Naive thymus-derived CD4-positive, alpha-beta T cell (primary cell): ENCODE measurements at regions of chr15 and their contacts with region 1.

Region 1: DNA sequence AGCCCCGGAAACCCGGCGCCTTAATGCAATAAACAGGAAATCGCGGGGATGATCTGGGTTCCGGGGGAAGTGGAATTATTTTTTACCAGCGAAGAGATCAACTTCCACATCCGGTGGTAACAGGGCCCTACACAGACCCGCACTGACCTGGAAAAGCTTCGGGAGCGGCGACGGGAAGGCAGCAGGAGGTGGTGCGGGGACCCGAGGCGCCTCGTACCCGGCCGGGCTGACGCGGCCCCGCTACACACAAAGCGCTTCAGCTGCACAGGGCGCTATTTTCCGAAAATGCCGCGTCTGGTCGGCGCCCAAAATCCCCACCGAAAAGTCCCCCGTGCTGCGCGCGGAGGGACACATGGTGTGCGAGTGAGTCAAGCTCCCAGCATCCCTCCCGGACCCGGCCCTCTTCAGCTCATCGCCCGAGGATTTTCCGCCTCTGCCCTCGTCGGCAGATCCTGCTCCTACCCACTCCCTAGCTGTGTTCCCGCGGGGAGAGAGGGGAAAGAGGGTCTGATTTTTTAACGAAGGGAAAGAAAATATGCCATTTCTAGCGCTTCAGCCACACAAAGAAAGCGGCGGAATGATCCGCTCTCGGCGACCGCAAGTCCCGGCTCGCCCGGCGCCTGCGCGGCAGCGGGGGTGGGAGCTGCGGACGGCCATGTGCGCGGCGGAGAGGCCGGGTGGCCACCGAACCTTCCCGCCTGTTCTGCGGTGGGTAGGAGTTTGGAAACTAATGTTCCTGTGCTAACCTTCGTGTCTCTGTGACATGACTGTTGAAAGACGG is at the start of gene GABPB1:
- DNase-seq: peak; percentile 85 to 93 (median 91)
- ATAC-seq: peak; percentile 69
- H3K4me3 ChIP-seq: peak within 1 kb of the TSS; percentile 83
- H3K4me3 Mint-ChIP-seq: peak within 1 kb of the TSS; percentile 83 to 99 (median 98)
- H3K27ac ChIP-seq: peak within 1 kb of the TSS; percentile 97
- H3K27ac Mint-ChIP-seq: peak within 1 kb of the TSS; percentile 98 to 100 (median 99)
- H3K4me1 ChIP-seq: peaks cover 38 to 47% of the 10 kb centered on the region in 2 donors
- H3K4me1 Mint-ChIP-seq: peaks cover 38 to 71% (median 55%) of the 10 kb centered on the region in 7 donors
- H3K27me3 ChIP-seq: no peaks in the 10 kb centered on the region
- H3K27me3 Mint-ChIP-seq: peaks cover 0 to 12% (median 0%) of the 10 kb centered on the region in 5 donors
- total RNA-seq, gene GABPB1: 14.7 to 42.7 (median 16.8) TPM

Region 2: DNA sequence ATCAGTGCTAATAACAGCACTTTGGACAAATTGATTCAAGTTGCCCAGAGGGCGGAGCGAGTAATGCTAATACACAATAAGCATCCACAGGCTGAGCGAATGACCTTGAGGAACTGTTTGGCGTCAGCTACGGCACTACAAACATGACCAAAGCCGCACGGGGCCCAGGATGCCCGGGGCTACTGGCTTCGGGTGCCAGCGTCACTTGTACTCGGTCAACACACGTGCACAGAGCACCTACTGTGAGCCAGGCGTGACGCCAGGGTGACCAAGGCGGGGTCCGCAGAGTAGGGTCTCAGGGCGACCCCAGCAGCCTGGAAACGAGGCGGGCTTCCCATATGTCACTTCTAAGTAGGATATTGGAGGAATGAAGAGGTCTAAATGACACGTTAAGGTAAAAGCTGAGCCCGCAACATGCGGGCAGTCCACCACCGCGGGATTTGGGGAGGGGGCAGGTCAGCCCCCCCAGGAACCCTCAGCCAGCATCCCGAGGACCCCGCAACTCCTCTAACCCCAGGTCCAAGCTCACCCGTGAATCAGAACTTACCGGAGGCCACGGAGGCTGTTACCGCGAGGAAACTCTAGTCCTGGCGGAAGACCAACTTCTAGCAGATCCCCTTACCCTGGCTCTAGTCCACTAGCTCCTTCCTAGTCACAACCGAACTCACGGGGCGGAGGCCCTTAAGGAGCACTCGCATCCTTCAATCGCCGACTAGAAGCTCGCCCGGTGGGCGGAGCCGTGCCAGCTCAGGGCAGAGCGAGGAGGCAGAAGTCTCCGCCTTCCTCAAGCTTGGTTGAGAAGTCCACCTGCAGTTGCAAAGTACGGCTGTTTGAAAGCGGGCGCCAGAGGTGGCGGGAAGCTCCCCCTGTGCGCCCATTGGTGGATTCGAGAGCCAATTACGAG is 1544.4 kb before region 1 on chr15 and contains the start of gene CEP152:
- CTCF ChIA-PET with region 1: no interaction called
- POLR2A ChIA-PET with region 1: interaction called, 9 read pairs
- intact Hi-C with region 1: loop called (anchors 1 to 2 kb)
- DNase-seq: peak; percentile 91 to 99 (median 98)
- ATAC-seq: peak; percentile 98
- H3K4me3 ChIP-seq: peak within 1 kb of the TSS; percentile 78
- H3K4me3 Mint-ChIP-seq: peak within 1 kb of the TSS; percentile 82 to 96 (median 89)
- H3K27ac ChIP-seq: peak within 1 kb of the TSS; percentile 76
- H3K27ac Mint-ChIP-seq: peak within 1 kb of the TSS; percentile 14 to 96 (median 87)
- H3K4me1 ChIP-seq: peaks cover 9 to 13% of the 10 kb centered on the region in 2 donors
- H3K4me1 Mint-ChIP-seq: peaks cover 12 to 38% (median 33%) of the 10 kb centered on the region in 7 donors
- H3K27me3 ChIP-seq: no peaks in the 10 kb centered on the region
- H3K27me3 Mint-ChIP-seq: peaks cover 0 to 24% (median 0%) of the 10 kb centered on the region in 5 donors
- total RNA-seq, gene CEP152: 6.2 to 26.3 (median 17.0) TPM

Region 3: DNA sequence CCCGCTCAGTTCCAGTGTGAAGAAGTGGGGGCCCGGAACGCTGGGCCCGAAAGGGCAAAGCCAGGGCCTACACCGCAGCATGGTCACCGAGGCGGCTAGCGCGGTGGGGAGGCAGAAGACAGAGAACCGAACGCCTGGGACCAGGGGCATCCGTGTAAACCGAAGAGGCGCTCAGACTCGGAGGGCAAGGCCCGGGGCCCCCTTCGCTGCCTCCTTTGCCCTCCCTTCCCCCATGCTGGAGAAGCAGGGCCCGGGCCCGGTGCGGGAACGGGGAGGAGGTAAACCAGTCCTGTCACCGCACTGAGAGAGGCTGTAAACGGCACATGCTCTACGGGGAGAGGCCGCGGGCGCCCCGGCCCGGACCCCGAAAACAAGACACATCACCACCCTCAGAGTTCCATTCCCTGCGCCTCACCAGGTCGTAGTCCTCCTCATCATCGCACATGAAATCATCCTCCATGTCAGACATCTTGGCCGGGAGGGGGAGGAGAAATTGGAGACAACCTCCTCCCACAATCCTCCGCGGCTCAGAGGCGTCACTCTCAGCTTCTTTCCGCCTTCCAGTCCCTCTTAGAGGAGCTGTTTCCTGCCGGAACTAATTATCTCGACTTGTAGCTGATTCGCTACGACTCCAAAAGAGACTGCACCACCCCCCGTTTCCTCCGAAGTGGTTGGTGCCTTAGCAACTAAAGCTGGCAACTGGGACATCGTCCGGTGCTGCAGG is 1199.8 kb before region 1 on chr15 and contains the start of gene COPS2:
- CTCF ChIA-PET with region 1: no interaction called
- POLR2A ChIA-PET with region 1: interaction called, 11 read pairs
- intact Hi-C with region 1: loop called (anchors 1 to 5 kb)
- DNase-seq: peak; percentile 69 to 96 (median 94)
- ATAC-seq: peak; percentile 99
- H3K4me3 ChIP-seq: peak within 1 kb of the TSS; percentile 88
- H3K4me3 Mint-ChIP-seq: peak within 1 kb of the TSS; percentile 95 to 100 (median 98)
- H3K27ac ChIP-seq: peak within 1 kb of the TSS; percentile 93
- H3K27ac Mint-ChIP-seq: peak within 1 kb of the TSS; percentile 93 to 100 (median 97)
- H3K4me1 ChIP-seq: peaks cover 9 to 25% of the 10 kb centered on the region in 2 donors
- H3K4me1 Mint-ChIP-seq: peaks cover 40 to 72% (median 59%) of the 10 kb centered on the region in 7 donors
- H3K27me3 ChIP-seq: no peaks in the 10 kb centered on the region
- H3K27me3 Mint-ChIP-seq: no peaks in the 10 kb centered on the region
- total RNA-seq, gene COPS2: 51.0 to 91.5 (median 63.6) TPM

Region 4: GRCh38 chr15:50182219-50183013 is 172.6 kb before region 1 on chr15:
- CTCF ChIA-PET with region 1: no interaction called
- POLR2A ChIA-PET with region 1: interaction called, 3 read pairs
- intact Hi-C with region 1: loop called in 1 of 2 experiments (anchors 2 kb)
- DNase-seq: peak in 6 of 9 donors; percentile 13 to 65 (median 21)
- ATAC-seq: peak; percentile 56
- H3K4me3 ChIP-seq: peak overlapping the region; percentile 67
- H3K4me3 Mint-ChIP-seq: peak overlapping the region; percentile 82 to 98 (median 90)
- H3K27ac ChIP-seq: no peak overlapping the region
- H3K27ac Mint-ChIP-seq: peak overlapping the region in 3 of 9 donors; percentile 39 to 85 (median 54)
- H3K4me1 ChIP-seq: peaks cover 0 to 6% of the 10 kb centered on the region in 2 donors
- H3K4me1 Mint-ChIP-seq: peaks cover 7 to 56% (median 12%) of the 10 kb centered on the region in 7 donors
- H3K27me3 ChIP-seq: no peaks in the 10 kb centered on the region
- H3K27me3 Mint-ChIP-seq: peaks cover 0 to 53% (median 38%) of the 10 kb centered on the region in 5 donors

Region 5: DNA sequence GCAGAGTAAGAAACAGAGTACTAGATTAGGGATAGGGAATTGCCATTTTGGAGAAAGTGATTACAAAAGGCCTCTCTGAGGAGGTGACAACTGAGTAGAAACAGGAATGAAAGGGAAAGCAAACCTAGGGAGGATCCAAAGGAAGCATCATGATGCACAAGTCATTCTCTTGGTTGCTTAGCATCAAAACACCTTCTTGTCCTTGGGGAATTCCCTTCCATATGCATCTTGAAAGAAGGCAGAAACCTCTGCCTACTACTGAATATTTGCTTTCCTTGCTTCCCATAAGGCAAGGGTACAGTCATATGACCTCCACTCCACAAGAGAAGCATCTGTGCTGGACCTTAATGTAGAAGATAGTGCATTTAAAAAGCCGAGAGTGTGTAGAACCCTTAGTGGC is 24.1 kb before region 1 on chr15:
- CTCF ChIA-PET with region 1: no interaction called
- POLR2A ChIA-PET with region 1: interaction called, 37 read pairs
- intact Hi-C with region 1: loop called in 1 of 2 experiments (anchors 2 kb)
- DNase-seq: no peak
- ATAC-seq: no peak
- H3K4me3 ChIP-seq: no peak overlapping the region
- H3K4me3 Mint-ChIP-seq: no peak overlapping the region
- H3K27ac ChIP-seq: no peak overlapping the region
- H3K27ac Mint-ChIP-seq: no peak overlapping the region
- H3K4me1 ChIP-seq: no peaks in the 10 kb centered on the region
- H3K4me1 Mint-ChIP-seq: peaks cover 15 to 29% (median 20%) of the 10 kb centered on the region in 7 donors
- H3K27me3 ChIP-seq: no peaks in the 10 kb centered on the region
- H3K27me3 Mint-ChIP-seq: no peaks in the 10 kb centered on the region

Region 6: DNA sequence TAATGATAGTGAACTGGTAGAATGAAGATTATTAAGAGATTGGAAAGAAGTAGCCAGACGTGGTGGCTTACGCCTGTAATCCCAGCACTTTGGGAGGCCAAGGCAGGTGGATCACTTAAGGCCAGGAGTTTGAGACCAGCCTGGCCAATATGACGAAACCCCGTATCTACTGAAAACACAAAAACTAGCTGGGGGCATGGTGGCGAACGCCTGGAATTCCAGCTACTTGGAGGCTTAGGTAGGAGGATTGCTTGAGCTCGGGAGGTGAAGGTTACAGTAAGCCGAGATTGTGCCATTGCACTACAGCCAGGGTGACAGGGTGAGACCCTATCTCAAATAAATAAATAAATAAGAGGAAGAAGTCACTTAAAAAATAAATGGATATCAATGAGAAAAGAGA is 83.2 kb after region 1 on chr15:
- CTCF ChIA-PET with region 1: no interaction called
- POLR2A ChIA-PET with region 1: no interaction called
- intact Hi-C with region 1: no loop called
- DNase-seq: no peak
- ATAC-seq: no peak
- H3K4me3 ChIP-seq: no peak overlapping the region
- H3K4me3 Mint-ChIP-seq: no peak overlapping the region
- H3K27ac ChIP-seq: no peak overlapping the region
- H3K27ac Mint-ChIP-seq: no peak overlapping the region
- H3K4me1 ChIP-seq: no peaks in the 10 kb centered on the region
- H3K4me1 Mint-ChIP-seq: peaks cover 14 to 42% (median 38%) of the 10 kb centered on the region in 7 donors
- H3K27me3 ChIP-seq: no peaks in the 10 kb centered on the region
- H3K27me3 Mint-ChIP-seq: no peaks in the 10 kb centered on the region

Region 7: GRCh38 chr15:50686468-50687301 is 331.7 kb after region 1 on chr15 and contains the start of gene TRPM7:
- CTCF ChIA-PET with region 1: no interaction called
- POLR2A ChIA-PET with region 1: interaction called, 4 read pairs
- intact Hi-C with region 1: loop called (anchors 1 to 2 kb)
- DNase-seq: peak; percentile 83 to 93 (median 90)
- ATAC-seq: peak; percentile 91
- H3K4me3 ChIP-seq: peak within 1 kb of the TSS; percentile 99
- H3K4me3 Mint-ChIP-seq: peak within 1 kb of the TSS; percentile 86 to 100 (median 97)
- H3K27ac ChIP-seq: peak within 1 kb of the TSS; percentile 93
- H3K27ac Mint-ChIP-seq: peak within 1 kb of the TSS; percentile 91 to 99 (median 97)
- H3K4me1 ChIP-seq: peaks cover 16 to 26% of the 10 kb centered on the region in 2 donors
- H3K4me1 Mint-ChIP-seq: peaks cover 42 to 62% (median 51%) of the 10 kb centered on the region in 7 donors
- H3K27me3 ChIP-seq: no peaks in the 10 kb centered on the region
- H3K27me3 Mint-ChIP-seq: no peaks in the 10 kb centered on the region
- total RNA-seq, gene TRPM7: 36.1 to 62.3 (median 45.2) TPM

Region 8: GRCh38 chr15:51737280-51738017 is 1382.4 kb after region 1 on chr15 and contains the start of gene LYSMD2:
- CTCF ChIA-PET with region 1: no interaction called
- POLR2A ChIA-PET with region 1: interaction called, 3 read pairs
- intact Hi-C with region 1: loop called in 1 of 2 experiments (anchors 5 kb)
- DNase-seq: peak; percentile 56 to 78 (median 66)
- ATAC-seq: peak; percentile 73
- H3K4me3 ChIP-seq: peak within 1 kb of the TSS; percentile 71
- H3K4me3 Mint-ChIP-seq: peak within 1 kb of the TSS; percentile 87 to 96 (median 94)
- H3K27ac ChIP-seq: peak within 1 kb of the TSS; percentile 84
- H3K27ac Mint-ChIP-seq: peak within 1 kb of the TSS; percentile 86 to 98 (median 96)
- H3K4me1 ChIP-seq: peaks cover 28 to 34% of the 10 kb centered on the region in 2 donors
- H3K4me1 Mint-ChIP-seq: peaks cover 47 to 71% (median 63%) of the 10 kb centered on the region in 7 donors
- H3K27me3 ChIP-seq: no peaks in the 10 kb centered on the region
- H3K27me3 Mint-ChIP-seq: no peaks in the 10 kb centered on the region
- total RNA-seq, gene LYSMD2: 12.5 to 33.8 (median 17.8) TPM